Activated CD4-positive, alpha-beta memory T cell treated with anti-CD3 and anti-CD28 coated beads for 36 hours (primary cell): ENCODE measurements at regions of chr16 and their contacts with region 1.

Region 1: GRCh38 chr16:3023669-3024478 is at the starts of genes HCFC1R1 and THOC6:
- DNase-seq: peak; percentile 98
- H3K4me3 Mint-ChIP-seq: peak within 1 kb of the TSS; percentile 91
- H3K27ac Mint-ChIP-seq: peak within 1 kb of the TSS; percentile 96
- H3K4me1 Mint-ChIP-seq: peaks cover 45% of the 10 kb centered on the region
- H3K27me3 Mint-ChIP-seq: peaks cover under 1% of the 10 kb centered on the region
- total RNA-seq, gene HCFC1R1: 31.8 to 32.8 TPM
- total RNA-seq, gene THOC6: 41.2 to 42.7 TPM

Region 2: GRCh38 chr16:2968738-2969544 is 54.9 kb before region 1 on chr16 and contains the start of gene PAQR4:
- CTCF ChIA-PET with region 1: interaction called, 9 read pairs
- POLR2A ChIA-PET with region 1: interaction called, 6 read pairs
- intact Hi-C with region 1: loop called (anchors 2 kb)
- DNase-seq: peak; percentile 87
- H3K4me3 Mint-ChIP-seq: peak within 1 kb of the TSS; percentile 76
- H3K27ac Mint-ChIP-seq: peak within 1 kb of the TSS; percentile 38
- H3K4me1 Mint-ChIP-seq: peaks cover 33% of the 10 kb centered on the region
- H3K27me3 Mint-ChIP-seq: peaks cover 21% of the 10 kb centered on the region
- total RNA-seq, gene PAQR4: 37.0 to 37.9 TPM

Region 3: GRCh38 chr16:3038256-3038655 is 14.4 kb after region 1 on chr16:
- CTCF ChIA-PET with region 1: interaction called, 60 read pairs
- POLR2A ChIA-PET with region 1: no interaction called
- intact Hi-C with region 1: no loop called
- DNase-seq: no peak
- H3K4me3 Mint-ChIP-seq: no peak overlapping the region
- H3K27ac Mint-ChIP-seq: no peak overlapping the region
- H3K4me1 Mint-ChIP-seq: peaks cover 14% of the 10 kb centered on the region
- H3K27me3 Mint-ChIP-seq: peaks cover 51% of the 10 kb centered on the region

Region 4: GRCh38 chr16:3059000-3059722 is 35.3 kb after region 1 on chr16:
- CTCF ChIA-PET with region 1: interaction called, 92 read pairs
- POLR2A ChIA-PET with region 1: no interaction called
- intact Hi-C with region 1: no loop called
- DNase-seq: peak; percentile 92
- H3K4me3 Mint-ChIP-seq: peak overlapping the region; percentile 91
- H3K27ac Mint-ChIP-seq: peak overlapping the region; percentile 95
- H3K4me1 Mint-ChIP-seq: peaks cover 68% of the 10 kb centered on the region
- H3K27me3 Mint-ChIP-seq: no peaks in the 10 kb centered on the region

Region 5: DNA sequence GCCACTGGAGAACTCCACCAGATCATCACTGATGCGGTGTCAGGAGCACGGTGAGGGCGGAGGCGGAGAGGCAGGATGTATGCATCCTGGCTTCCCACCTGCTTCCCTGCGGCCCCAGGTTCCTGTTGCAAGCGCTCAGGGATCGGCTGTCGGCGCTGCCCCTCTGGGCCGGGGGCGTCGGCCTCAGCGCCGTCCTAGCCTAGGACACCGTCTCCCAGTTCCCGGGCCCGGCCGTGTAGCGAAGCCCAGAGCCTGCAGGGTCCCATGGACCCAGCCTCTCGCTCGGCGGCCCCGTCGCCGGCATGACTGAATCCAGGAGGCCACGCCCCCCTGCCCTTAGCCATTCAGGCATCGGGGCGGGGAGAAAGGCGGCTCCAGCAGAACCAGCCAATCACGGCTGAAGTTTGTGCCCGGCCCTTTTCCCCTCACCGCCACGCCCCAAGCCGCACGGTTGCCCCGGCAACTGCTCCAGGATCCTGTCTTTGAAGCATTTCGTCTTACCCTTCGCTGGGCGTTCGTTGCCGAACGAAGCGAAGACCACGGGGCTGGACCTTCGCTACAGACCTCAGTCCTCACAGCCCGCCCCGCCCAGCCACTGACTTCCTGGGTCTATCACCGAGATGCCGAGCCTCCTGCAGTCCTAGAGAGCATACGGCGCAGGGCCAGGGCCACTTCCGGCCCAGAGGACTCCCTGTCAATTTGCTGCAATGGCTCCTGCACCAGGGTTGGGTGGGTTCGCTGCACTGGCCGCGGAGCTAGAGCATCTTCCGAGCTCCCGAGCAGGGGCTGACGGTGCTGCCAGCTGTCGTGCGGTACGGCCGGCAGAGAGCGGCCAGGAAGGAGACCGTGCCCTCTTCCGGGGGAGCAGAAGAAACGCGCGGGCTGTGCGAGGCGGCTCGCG is 100.4 kb after region 1 on chr16:
- CTCF ChIA-PET with region 1: interaction called, 200 read pairs
- POLR2A ChIA-PET with region 1: no interaction called
- intact Hi-C with region 1: no loop called
- DNase-seq: peak; percentile 98
- H3K4me3 Mint-ChIP-seq: peak overlapping the region; percentile 98
- H3K27ac Mint-ChIP-seq: peak overlapping the region; percentile 95
- H3K4me1 Mint-ChIP-seq: peaks cover 21% of the 10 kb centered on the region
- H3K27me3 Mint-ChIP-seq: no peaks in the 10 kb centered on the region

Region 6: GRCh38 chr16:3150346-3151218 is 126.7 kb after region 1 on chr16:
- CTCF ChIA-PET with region 1: interaction called, 10 read pairs
- POLR2A ChIA-PET with region 1: interaction called, 4 read pairs
- intact Hi-C with region 1: no loop called
- DNase-seq: peak; percentile 100
- H3K4me3 Mint-ChIP-seq: peak overlapping the region; percentile 84
- H3K27ac Mint-ChIP-seq: peak overlapping the region; percentile 82
- H3K4me1 Mint-ChIP-seq: peaks cover 27% of the 10 kb centered on the region
- H3K27me3 Mint-ChIP-seq: peaks cover 12% of the 10 kb centered on the region

Region 7: DNA sequence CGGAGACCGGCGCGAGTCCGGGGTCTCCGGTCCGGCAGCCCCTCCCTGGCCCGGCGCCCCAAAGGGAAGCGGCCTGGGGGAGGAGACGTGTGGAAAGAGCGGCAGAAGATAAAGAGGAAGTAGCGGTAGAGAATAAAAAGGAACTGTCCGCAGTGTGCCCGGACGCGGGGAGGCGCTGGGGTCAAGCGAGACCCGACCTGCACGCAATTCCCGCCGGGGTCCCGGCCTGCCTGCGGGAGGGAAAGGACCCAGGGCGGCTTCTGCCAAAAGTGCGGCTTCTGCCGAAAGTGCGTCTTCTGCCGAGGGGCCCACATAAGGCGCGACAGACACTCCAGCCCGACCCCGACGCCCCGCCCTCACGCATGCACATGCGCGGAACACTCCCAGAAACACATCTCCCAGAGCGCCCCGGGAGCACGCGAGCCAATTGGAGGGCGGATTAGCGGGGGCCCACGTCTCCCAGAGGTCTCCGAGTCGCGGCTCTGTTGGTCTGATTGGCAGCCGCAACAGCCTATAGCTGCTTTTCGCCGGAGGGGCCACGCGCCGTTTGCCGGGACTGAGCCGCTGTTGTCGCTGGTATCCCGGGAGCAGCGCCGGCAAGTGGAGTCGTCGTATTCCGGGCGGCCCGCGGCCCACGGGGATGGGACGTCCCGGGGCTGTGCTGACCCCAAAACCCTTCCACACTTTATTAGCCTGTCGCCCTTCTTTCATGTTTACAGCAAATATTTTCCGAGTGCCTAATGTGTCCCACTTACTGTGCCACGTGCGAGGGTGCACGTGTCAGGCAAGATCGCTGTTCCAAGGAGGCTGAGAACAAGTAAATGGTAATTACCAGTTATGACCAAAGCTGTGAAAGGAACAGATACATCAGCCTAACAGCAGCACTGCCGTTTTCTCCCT is 240.5 kb after region 1 on chr16:
- CTCF ChIA-PET with region 1: no interaction called
- POLR2A ChIA-PET with region 1: no interaction called
- intact Hi-C with region 1: loop called (anchors 5 kb)
- DNase-seq: peak; percentile 99
- H3K4me3 Mint-ChIP-seq: peak overlapping the region; percentile 80
- H3K27ac Mint-ChIP-seq: peak overlapping the region; percentile 93
- H3K4me1 Mint-ChIP-seq: peaks cover 24% of the 10 kb centered on the region
- H3K27me3 Mint-ChIP-seq: no peaks in the 10 kb centered on the region

Region 8: DNA sequence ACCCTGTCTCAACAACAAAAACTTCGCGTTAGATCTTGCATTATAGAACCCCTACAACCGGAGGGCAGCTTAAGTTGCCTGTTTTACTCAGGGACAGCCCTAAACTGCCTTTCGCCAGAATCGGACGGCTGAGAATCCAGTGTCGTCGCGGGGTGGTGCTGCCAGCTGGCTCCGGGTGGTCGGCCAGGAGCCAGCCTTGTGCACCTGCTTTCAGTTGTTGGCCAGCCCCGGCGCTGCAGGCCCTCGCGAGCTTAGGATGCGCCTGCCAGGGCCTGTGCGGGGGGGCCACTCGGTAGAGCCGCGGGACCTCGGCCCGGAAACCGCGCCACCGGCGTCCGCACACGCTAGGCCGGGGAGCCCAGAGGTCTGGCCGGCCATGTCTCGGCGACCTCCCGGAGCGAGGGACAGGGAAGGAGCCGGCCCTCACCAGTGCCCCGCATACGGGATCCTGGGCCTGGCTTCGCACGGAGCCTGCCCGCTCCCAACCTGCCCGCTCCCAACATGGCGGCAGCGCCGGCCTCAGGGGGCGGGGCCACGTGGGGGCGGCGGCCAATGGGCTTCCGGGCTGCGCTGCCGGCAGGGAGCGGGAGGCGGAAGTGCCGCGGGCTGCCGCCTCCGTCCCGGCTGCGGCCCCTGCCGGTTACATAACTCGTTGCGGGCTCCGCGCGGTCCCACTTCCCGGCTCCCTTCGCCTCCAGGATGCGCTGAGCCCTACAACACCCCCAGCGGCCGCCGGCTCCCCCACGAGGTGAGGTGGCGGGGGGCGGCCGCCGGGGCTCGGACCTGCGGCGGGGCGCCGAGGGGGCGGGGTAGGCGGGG is 433.8 kb after region 1 on chr16:
- CTCF ChIA-PET with region 1: no interaction called
- POLR2A ChIA-PET with region 1: no interaction called
- intact Hi-C with region 1: no loop called
- DNase-seq: peak; percentile 92
- H3K4me3 Mint-ChIP-seq: peak overlapping the region; percentile 80
- H3K27ac Mint-ChIP-seq: peak overlapping the region; percentile 90
- H3K4me1 Mint-ChIP-seq: peaks cover 41% of the 10 kb centered on the region
- H3K27me3 Mint-ChIP-seq: no peaks in the 10 kb centered on the region